HEK293 (cell line): ENCODE measurements at regions of chr5 and their contacts with region 1.

Region 1: DNA sequence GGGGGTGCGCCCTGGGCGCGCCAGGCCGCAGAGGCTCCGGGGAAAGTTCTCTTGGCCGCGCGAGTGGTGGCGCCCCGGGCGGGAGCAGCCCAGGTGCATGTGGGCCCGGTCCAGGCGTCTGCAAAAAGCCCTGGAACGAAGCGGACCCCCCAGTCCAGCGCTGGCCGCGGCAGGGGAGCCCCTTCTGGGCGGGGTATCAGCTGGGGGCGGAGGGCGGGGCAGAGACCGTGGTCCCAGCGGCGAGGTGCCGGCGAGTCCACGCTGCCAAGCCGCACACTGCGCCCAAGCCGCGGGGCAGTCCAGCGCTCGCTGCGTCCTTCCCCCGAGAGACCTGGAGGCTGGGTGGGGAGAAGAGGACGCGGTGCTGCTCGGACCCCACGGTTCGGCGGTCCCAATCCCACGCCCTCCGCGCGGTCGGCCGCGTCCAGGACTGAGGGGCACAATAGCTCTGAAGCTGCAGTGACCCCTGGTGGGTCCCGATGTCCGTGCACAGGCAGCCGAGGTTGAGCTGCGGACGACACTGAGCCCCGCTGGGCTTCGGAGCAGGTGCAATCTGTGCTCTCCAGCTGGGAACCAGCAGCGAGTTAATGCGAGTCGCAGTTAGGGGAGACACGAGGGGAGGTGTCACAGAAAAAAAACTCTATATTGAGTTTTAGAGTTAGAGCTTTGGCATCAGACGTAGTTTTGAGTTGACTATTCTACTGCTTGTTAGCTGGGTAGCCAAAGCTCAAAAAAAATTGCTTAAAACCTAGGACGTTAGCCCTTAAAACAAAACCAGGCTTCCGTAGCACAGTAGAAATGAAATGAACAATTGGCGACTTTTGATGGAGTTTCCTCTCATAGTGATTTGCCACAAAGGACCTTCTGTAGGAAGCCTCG is 1.1 kb upstream of the EPB41L4A start:
- H3K4me3 ChIP-seq: peak overlapping the region; percentile 66
- H3K27ac ChIP-seq: peak overlapping the region; percentile 59; the same call in 1 of the 2 replicates
- H3K4me1 ChIP-seq: no peaks in the 10 kb centered on the region
- CTCF ChIP-seq: peak; percentile 99

Region 2: DNA sequence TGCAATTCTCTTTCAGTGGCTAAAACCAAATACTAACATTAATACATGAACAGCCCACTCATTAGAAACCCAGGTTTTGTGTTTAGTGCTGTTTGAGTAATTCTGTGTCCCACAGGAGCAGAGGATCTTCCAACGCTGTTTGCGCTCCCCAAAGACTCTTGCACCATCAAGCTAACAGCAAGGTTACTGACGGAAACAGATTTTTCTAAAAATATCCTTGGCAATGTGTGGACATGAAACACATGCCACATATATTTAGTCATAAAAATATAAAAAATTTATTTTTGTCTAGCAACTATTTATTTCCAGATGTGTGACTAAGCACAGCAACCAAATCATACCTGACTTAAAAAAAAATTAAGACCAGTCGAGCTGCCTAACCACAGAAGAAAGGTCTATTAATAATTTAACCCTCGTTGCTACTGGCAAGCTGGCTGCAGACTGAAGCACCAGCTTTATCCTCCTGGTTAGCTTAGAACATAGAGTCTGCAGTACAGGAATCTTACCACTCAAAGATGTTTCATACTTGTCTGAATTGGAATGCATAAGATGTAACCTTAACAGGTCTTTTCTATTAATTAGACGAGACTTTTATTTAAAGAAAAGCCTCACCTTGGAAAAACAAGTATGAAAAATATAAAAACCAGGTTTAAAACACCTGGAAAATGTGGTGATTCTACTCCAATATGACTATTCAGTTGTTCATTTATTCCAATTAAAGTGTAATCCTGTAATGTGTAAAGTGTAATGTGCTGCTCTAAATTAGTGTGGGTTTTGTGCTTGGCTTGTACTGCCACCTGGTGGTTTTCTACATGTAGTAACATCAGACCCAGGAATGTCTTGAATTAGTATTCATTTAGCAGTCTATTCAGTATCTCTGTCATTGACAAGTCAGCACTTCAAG is 273.6 kb before region 1 on chr5:
- CTCF ChIA-PET with region 1: no interaction called
- POLR2A ChIA-PET with region 1: no interaction called
- H3K4me3 ChIP-seq: no peak overlapping the region
- H3K27ac ChIP-seq: no peak overlapping the region
- H3K4me1 ChIP-seq: no peaks in the 10 kb centered on the region
- CTCF ChIP-seq: peak; percentile 37

Region 3: GRCh38 chr5:112174959-112175594 is 245.1 kb before region 1 on chr5:
- CTCF ChIA-PET with region 1: interaction called, 116 read pairs
- POLR2A ChIA-PET with region 1: interaction called, 4 read pairs
- H3K4me3 ChIP-seq: no peak overlapping the region
- H3K27ac ChIP-seq: no peak overlapping the region
- H3K4me1 ChIP-seq: no peaks in the 10 kb centered on the region
- CTCF ChIP-seq: 0 out of 2 replicates have a peak, but pooled peaks have one; percentile 12

Region 4: DNA sequence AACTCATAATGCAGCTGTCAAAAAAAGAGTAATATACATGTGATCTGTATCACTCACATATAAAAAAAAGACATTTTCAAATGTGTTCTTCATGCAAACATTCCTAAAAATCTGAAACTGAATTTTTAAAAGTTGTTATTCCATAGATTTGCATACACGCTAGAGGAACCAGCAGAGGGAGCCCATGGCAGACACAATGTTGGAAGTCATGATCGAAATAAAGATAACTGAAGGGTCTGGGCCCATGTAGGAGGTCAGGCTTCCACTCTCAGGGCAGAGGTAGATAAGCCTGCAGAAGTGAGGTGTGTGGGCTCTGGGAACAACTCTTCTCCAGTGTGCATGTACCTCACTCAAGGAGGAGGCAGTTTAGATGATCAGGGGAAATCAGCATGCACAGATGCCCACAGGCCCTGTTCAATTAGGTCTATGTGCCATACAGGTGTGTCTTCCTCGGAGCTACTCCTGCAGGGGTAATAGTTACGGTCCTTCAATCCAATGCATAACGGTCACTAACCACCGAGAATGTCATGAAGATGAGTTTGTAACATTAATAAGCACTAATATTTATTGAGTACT is 209.7 kb before region 1 on chr5:
- CTCF ChIA-PET with region 1: interaction called, 30 read pairs
- POLR2A ChIA-PET with region 1: no interaction called
- H3K4me3 ChIP-seq: no peak overlapping the region
- H3K27ac ChIP-seq: no peak overlapping the region
- H3K4me1 ChIP-seq: peaks cover 5% of the 10 kb centered on the region
- CTCF ChIP-seq: 0 out of 2 replicates have a peak, but pooled peaks have one; percentile 23

Region 5: DNA sequence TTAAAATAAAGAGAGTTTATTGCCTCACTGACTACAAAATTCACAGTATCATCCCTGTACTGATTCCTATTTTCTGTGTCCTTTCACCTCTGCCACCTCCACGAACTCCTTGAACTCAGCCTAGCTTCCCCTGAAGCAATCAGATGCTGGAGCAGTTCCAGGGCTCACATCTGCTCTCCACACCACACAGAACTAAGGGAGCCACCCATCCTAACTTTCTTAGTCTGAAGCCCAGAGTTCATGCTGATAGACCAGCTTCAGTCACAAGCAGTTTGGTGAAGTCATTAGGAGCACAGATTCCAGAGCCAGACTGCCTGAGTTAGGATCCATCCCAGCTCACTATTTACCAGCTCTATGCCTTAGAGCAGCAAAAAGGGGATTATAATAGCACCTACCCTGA is 14.4 kb after region 1 on chr5:
- CTCF ChIA-PET with region 1: interaction called, 24 read pairs
- POLR2A ChIA-PET with region 1: no interaction called
- H3K4me3 ChIP-seq: no peak overlapping the region
- H3K27ac ChIP-seq: no peak overlapping the region
- H3K4me1 ChIP-seq: no peaks in the 10 kb centered on the region
- CTCF ChIP-seq: no peak